Psoas muscle (tissue), 8 donors: ENCODE measurements at regions of chr20 and their contacts with region 1.

Region 1: GRCh38 chr20:17682103-17682888 is at the start of gene RRBP1:
- DNase-seq: peak; percentile 99
- ATAC-seq: peak; percentile 95 to 96 (median 96)
- H3K4me3 ChIP-seq: peak within 1 kb of the TSS; percentile 75
- H3K27ac ChIP-seq: peak within 1 kb of the TSS; percentile 81
- H3K4me1 ChIP-seq: peaks cover 11% of the 10 kb centered on the region
- H3K27me3 ChIP-seq: no peaks in the 10 kb centered on the region
- CTCF ChIP-seq: peak; percentile 62
- total RNA-seq, gene RRBP1: 21.1 to 40.8 (median 22.6) TPM

Region 2: GRCh38 chr20:17518339-17519052 is 163.8 kb before region 1 on chr20:
- intact Hi-C with region 1: no loop called
- DNase-seq: peak in 1 of 2 donors; percentile 50
- ATAC-seq: no peak
- H3K4me3 ChIP-seq: no peak overlapping the region
- H3K27ac ChIP-seq: no peak overlapping the region
- H3K4me1 ChIP-seq: peaks cover 2% of the 10 kb centered on the region
- H3K27me3 ChIP-seq: no peaks in the 10 kb centered on the region
- CTCF ChIP-seq: no peak

Region 3: GRCh38 chr20:18001131-18001921 is 319.0 kb after region 1 on chr20:
- intact Hi-C with region 1: loop called (anchors 2 to 5 kb)
- DNase-seq: peak; percentile 86 to 88
- ATAC-seq: peak; percentile 80 to 90 (median 80)
- H3K4me3 ChIP-seq: no peak overlapping the region
- H3K27ac ChIP-seq: peak overlapping the region; percentile 51
- H3K4me1 ChIP-seq: peaks cover 8% of the 10 kb centered on the region
- H3K27me3 ChIP-seq: no peaks in the 10 kb centered on the region
- CTCF ChIP-seq: no peak